AG04449 (cell line): ENCODE measurements at regions of chr6 and their contacts with region 1.

Region 1: GRCh38 chr6:154675602-154676088 is 57.6 kb upstream of the SCAF8 start:
- DNase-seq: peak; percentile 88
- H3K4me3 ChIP-seq: no peak overlapping the region
- CTCF ChIP-seq: peak; percentile 88

Region 2: DNA sequence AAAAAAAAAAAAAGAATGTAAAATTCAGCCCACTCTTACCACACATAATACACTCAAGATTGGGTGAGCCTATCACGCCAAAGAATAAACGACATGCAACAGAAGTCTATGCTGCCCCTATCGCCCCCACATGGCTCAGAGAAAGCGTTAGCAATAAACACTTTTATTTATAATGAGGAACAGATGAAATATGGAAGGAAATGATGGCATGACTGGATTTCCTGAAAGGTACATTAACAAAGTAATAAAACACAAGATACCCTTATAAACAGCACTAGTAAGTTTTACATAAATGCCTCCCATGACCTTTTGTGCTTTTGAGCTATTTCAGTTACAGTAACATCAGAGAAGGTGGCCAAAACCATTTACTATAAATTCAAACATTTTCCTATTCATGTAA is 13.9 kb before region 1 on chr6:
- CTCF ChIA-PET with region 1: interaction called, 13 read pairs
- POLR2A ChIA-PET with region 1: no interaction called
- DNase-seq: no peak
- H3K4me3 ChIP-seq: no peak overlapping the region
- CTCF ChIP-seq: no peak

Region 3: GRCh38 chr6:154705471-154706113 is 29.9 kb after region 1 on chr6:
- CTCF ChIA-PET with region 1: interaction called, 10 read pairs
- POLR2A ChIA-PET with region 1: no interaction called
- DNase-seq: no peak
- H3K4me3 ChIP-seq: no peak overlapping the region
- CTCF ChIP-seq: no peak

Region 4: DNA sequence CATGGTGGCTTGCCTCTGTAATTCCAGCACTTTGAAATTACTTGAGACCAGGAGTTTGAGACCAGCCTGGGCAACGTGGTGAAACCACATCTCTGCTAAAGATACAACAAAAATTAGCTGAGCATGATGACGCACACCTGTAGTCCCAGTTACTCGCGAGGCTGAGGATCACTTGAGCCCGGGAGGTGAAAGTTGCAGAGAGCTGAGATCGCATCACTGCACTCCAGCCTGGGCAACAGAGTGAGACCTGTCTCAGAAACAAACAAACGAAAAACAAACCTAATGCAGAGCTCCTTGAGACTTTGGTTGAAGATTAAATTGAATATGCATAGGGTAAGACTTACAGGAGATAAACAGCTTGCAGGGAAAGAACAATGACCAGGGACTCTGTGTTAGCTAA is 138.4 kb after region 1 on chr6:
- CTCF ChIA-PET with region 1: interaction called, 264 read pairs
- POLR2A ChIA-PET with region 1: no interaction called
- DNase-seq: no peak
- H3K4me3 ChIP-seq: no peak overlapping the region
- CTCF ChIP-seq: no peak

Region 5: GRCh38 chr6:154852687-154853086 is 177.0 kb after region 1 on chr6:
- CTCF ChIA-PET with region 1: interaction called, 18 read pairs
- POLR2A ChIA-PET with region 1: no interaction called
- DNase-seq: no peak
- H3K4me3 ChIP-seq: no peak overlapping the region
- CTCF ChIP-seq: no peak

Region 6: GRCh38 chr6:155314092-155314772 is 638.6 kb after region 1 on chr6 and contains the start of gene TFB1M:
- CTCF ChIA-PET with region 1: interaction called, 19 read pairs
- POLR2A ChIA-PET with region 1: no interaction called
- DNase-seq: peak; percentile 89
- H3K4me3 ChIP-seq: peak within 1 kb of the TSS; percentile 88
- CTCF ChIP-seq: no peak